Activated CD4-positive, alpha-beta memory T cell treated with anti-CD3 and anti-CD28 coated beads for 36 hours (primary cell): ENCODE measurements at regions of chr1 and their contacts with region 1.

Region 1: GRCh38 chr1:41639332-41639936 is 155.0 kb upstream of the EDN2 start:
- DNase-seq: peak; percentile 87
- H3K4me3 Mint-ChIP-seq: peak overlapping the region; percentile 59
- H3K27ac Mint-ChIP-seq: no peak overlapping the region
- H3K4me1 Mint-ChIP-seq: peaks cover 12% of the 10 kb centered on the region
- H3K27me3 Mint-ChIP-seq: no peaks in the 10 kb centered on the region

Region 2: GRCh38 chr1:41609166-41609883 is 30.1 kb before region 1 on chr1:
- CTCF ChIA-PET with region 1: no interaction called
- POLR2A ChIA-PET with region 1: no interaction called
- intact Hi-C with region 1: no loop called
- DNase-seq: no peak
- H3K4me3 Mint-ChIP-seq: no peak overlapping the region
- H3K27ac Mint-ChIP-seq: no peak overlapping the region
- H3K4me1 Mint-ChIP-seq: peaks cover 26% of the 10 kb centered on the region
- H3K27me3 Mint-ChIP-seq: no peaks in the 10 kb centered on the region

Region 3: DNA sequence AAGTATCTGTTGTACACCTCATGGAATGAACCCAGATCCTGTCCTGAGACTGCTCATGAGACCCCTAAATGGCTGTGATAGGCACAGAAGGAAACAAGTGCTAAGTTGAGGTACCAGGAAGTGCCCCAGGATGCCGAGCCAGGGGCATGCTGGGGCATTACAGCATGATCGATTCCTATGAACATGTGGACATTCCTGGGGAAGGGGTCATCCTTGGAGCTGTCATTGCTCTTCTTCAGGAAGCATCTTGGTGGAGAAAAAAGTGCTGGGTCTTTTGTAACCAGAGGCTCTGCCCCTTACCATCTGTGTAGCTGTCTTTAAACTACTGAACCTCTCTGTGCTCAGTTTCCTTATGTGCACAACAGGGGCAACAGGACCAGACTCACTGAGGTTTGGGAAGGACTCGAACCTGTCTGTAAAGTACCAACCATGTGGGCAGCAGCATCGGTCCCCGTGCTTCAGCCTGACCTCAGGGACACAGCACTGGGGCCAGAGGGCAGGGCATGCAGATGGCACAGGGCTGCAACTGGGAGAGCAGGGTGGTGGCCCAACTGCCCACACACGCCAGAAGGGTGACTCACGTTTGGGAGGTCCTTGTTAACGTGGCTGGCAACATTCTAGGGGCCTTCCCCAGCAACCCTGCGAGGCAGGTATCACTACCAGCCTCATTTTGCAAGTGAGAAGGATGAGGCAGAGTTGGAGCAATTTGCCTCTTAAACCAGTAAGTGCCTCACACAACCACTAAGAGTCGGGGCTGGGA is 12.6 kb before region 1 on chr1:
- CTCF ChIA-PET with region 1: no interaction called
- POLR2A ChIA-PET with region 1: interaction called, 4 read pairs
- intact Hi-C with region 1: loop called (anchors 1 kb)
- DNase-seq: peak; percentile 88
- H3K4me3 Mint-ChIP-seq: no peak overlapping the region
- H3K27ac Mint-ChIP-seq: peak overlapping the region; percentile 60
- H3K4me1 Mint-ChIP-seq: peaks cover 73% of the 10 kb centered on the region
- H3K27me3 Mint-ChIP-seq: no peaks in the 10 kb centered on the region